Activated B cell treated with CpG ODN at 0.5 μM for 24 hours (primary cell): ENCODE measurements at regions of chr1 and their contacts with region 1.

Region 1: GRCh38 chr1:42335050-42335808 is at the start of gene FOXJ3:
- DNase-seq: peak; percentile 91
- ATAC-seq: peak; percentile 92
- H3K4me3 Mint-ChIP-seq: peak within 1 kb of the TSS; percentile 93
- H3K27ac Mint-ChIP-seq: peak within 1 kb of the TSS; percentile 86
- H3K4me1 Mint-ChIP-seq: peaks cover 41% of the 10 kb centered on the region
- H3K27me3 Mint-ChIP-seq: no peaks in the 10 kb centered on the region
- CTCF ChIP-seq: no peak
- total RNA-seq, gene FOXJ3: 54.7 and 63.9 TPM in 2 replicates

Region 2: GRCh38 chr1:41537788-41538351 is 797.4 kb before region 1 on chr1:
- CTCF ChIA-PET with region 1: no interaction called
- POLR2A ChIA-PET with region 1: interaction called, 17 read pairs
- intact Hi-C with region 1: no loop called
- DNase-seq: peak; percentile 14
- ATAC-seq: peak; percentile 16
- H3K4me3 Mint-ChIP-seq: peak overlapping the region; percentile 68
- H3K27ac Mint-ChIP-seq: peak overlapping the region; percentile 46
- H3K4me1 Mint-ChIP-seq: peaks cover 62% of the 10 kb centered on the region
- H3K27me3 Mint-ChIP-seq: no peaks in the 10 kb centered on the region
- CTCF ChIP-seq: no peak

Region 3: GRCh38 chr1:42380586-42381279 is 45.5 kb after region 1 on chr1 and contains the start of gene RIMKLA:
- CTCF ChIA-PET with region 1: no interaction called
- POLR2A ChIA-PET with region 1: no interaction called
- intact Hi-C with region 1: no loop called
- DNase-seq: peak; percentile 27
- ATAC-seq: peak; percentile 80
- H3K4me3 Mint-ChIP-seq: peak within 1 kb of the TSS; percentile 78
- H3K27ac Mint-ChIP-seq: no peak within 1 kb of the TSS
- H3K4me1 Mint-ChIP-seq: peaks cover 9% of the 10 kb centered on the region
- H3K27me3 Mint-ChIP-seq: peaks cover 47% of the 10 kb centered on the region
- CTCF ChIP-seq: no peak
- total RNA-seq, gene RIMKLA: 0.02 TPM in 1 of 2 replicates, not detected in the other

Region 4: GRCh38 chr1:42657971-42658879 is 323.0 kb after region 1 on chr1 and contains the start of gene PPIH:
- CTCF ChIA-PET with region 1: no interaction called
- POLR2A ChIA-PET with region 1: interaction called, 4 read pairs
- intact Hi-C with region 1: loop called (anchors 5 kb)
- DNase-seq: peak; percentile 87
- ATAC-seq: peak; percentile 99
- H3K4me3 Mint-ChIP-seq: peak within 1 kb of the TSS; percentile 95
- H3K27ac Mint-ChIP-seq: peak within 1 kb of the TSS; percentile 85
- H3K4me1 Mint-ChIP-seq: peaks cover 35% of the 10 kb centered on the region
- H3K27me3 Mint-ChIP-seq: no peaks in the 10 kb centered on the region
- CTCF ChIP-seq: no peak
- total RNA-seq, gene PPIH: 64.1 and 65.1 TPM in 2 replicates

Region 5: DNA sequence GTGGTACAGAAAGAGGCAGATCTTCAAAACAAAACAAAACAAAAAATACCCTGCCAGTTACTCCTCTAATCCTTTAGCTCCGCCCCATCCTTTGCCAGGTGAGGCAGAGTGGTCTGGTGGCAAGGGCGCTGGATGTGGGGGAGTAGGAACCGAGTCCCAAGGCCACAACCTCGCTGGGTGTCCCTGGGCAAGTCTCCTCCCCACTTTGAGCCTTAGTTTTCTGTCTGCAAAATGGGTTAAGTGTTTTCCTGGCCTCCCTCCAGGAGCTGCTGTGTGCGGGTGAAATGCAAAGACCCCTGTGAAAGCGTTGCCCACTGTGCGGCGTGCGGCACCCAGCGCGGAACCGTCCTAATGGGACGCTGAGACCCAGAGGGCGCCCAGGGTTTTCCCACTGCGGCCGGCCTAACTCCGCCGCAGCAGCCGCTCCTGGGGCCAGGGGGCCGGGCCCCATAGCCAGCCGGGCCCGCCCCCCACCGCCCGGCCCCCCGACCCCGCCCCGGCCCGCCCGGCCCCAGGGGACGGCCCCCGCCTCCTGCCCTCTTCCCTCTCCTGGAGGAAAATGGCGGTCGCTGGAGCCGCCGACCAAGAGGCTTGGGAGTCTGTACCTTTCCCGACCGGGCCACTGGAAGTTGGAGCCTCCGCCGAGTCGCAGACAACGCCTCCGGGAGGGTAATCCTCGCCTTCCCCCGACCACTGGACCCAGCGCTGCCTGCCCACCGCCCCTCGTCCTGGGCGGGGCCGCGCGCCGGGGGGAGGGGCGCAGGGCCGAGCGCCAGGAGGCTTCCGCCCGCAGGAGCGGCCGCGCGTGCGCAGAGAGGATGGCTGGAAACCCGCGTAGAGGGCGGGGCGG is 481.6 kb after region 1 on chr1 and contains the starts of genes ERMAP and SVBP:
- CTCF ChIA-PET with region 1: no interaction called
- POLR2A ChIA-PET with region 1: no interaction called
- intact Hi-C with region 1: loop called (anchors 1 kb)
- DNase-seq: peak; percentile 97
- ATAC-seq: peak; percentile 88
- H3K4me3 Mint-ChIP-seq: peak within 1 kb of the TSS; percentile 86
- H3K27ac Mint-ChIP-seq: peak within 1 kb of the TSS; percentile 86
- H3K4me1 Mint-ChIP-seq: peaks cover 20% of the 10 kb centered on the region
- H3K27me3 Mint-ChIP-seq: no peaks in the 10 kb centered on the region
- CTCF ChIP-seq: no peak
- total RNA-seq, gene ERMAP: 7.1 and 10.7 TPM in 2 replicates
- total RNA-seq, gene SVBP: 21.5 and 22.4 TPM in 2 replicates